ENCODE measurements at regions of chr19 and their contacts with region 1.

Region 1: GRCh38 chr19:34041925-34042521 is 130.3 kb upstream of the LSM14A start:
- H3K4me3 ChIP-seq: no peak overlapping the region
- H3K27ac ChIP-seq: no peak overlapping the region
- H3K4me1 ChIP-seq: no peaks in the 10 kb centered on the region
- CTCF ChIP-seq: peak; percentile 70; the same call in 1 of the 2 replicates

Region 2: GRCh38 chr19:34023381-34023780 is 18.6 kb before region 1 on chr19:
- CTCF ChIA-PET with region 1: interaction called, 15 read pairs
- POLR2A ChIA-PET with region 1: no interaction called
- H3K4me3 ChIP-seq: no peak overlapping the region
- H3K27ac ChIP-seq: no peak overlapping the region
- H3K4me1 ChIP-seq: no peaks in the 10 kb centered on the region
- CTCF ChIP-seq: no peak

Region 3: GRCh38 chr19:34067861-34068271 is 25.8 kb after region 1 on chr19:
- CTCF ChIA-PET with region 1: interaction called, 18 read pairs
- POLR2A ChIA-PET with region 1: no interaction called
- H3K4me3 ChIP-seq: no peak overlapping the region
- H3K27ac ChIP-seq: no peak overlapping the region
- H3K4me1 ChIP-seq: peaks cover 3% of the 10 kb centered on the region; the same call in 1 of the 2 replicates
- CTCF ChIP-seq: no peak

Region 4: GRCh38 chr19:34082289-34083077 is 40.5 kb after region 1 on chr19:
- CTCF ChIA-PET with region 1: interaction called, 26 read pairs
- POLR2A ChIA-PET with region 1: no interaction called
- H3K4me3 ChIP-seq: no peak overlapping the region
- H3K27ac ChIP-seq: no peak overlapping the region
- H3K4me1 ChIP-seq: no peaks in the 10 kb centered on the region
- CTCF ChIP-seq: no peak

Region 5: DNA sequence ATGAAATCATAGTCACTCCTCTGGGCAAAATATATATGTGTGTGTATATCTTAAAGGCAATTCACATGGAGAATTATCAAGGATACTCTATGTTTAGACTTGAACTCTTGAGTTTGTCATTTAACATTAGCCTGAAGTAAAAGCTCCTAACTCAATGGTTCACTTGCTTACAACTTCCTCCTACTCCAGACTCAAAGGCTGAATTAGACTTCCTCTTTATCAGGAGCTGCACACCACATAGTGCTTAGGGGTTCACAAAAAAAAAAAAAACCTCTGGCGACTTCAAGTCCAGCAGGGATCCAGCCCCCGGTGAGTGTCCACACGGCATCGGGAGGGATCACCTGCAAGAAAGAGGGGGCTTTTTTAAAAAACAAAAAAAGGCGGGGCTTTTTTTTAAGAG is 62.1 kb after region 1 on chr19:
- CTCF ChIA-PET with region 1: interaction called, 12 read pairs
- POLR2A ChIA-PET with region 1: no interaction called
- H3K4me3 ChIP-seq: no peak overlapping the region
- H3K27ac ChIP-seq: no peak overlapping the region
- H3K4me1 ChIP-seq: no peaks in the 10 kb centered on the region
- CTCF ChIP-seq: no peak

Measured in HEK293 (cell line).